ENCODE measurements at regions of chr1 and their contacts with region 1.

Region 1: GRCh38 chr1:204363335-204364124 is 3.8 kb upstream of the PLEKHA6 start:
- DNase-seq: peak; percentile 84
- H3K4me3 Mint-ChIP-seq: peak overlapping the region; percentile 38
- H3K27ac Mint-ChIP-seq: peak overlapping the region; percentile 52
- H3K4me1 Mint-ChIP-seq: peaks cover 19% of the 10 kb centered on the region
- H3K27me3 Mint-ChIP-seq: peaks cover 5% of the 10 kb centered on the region

Region 2: DNA sequence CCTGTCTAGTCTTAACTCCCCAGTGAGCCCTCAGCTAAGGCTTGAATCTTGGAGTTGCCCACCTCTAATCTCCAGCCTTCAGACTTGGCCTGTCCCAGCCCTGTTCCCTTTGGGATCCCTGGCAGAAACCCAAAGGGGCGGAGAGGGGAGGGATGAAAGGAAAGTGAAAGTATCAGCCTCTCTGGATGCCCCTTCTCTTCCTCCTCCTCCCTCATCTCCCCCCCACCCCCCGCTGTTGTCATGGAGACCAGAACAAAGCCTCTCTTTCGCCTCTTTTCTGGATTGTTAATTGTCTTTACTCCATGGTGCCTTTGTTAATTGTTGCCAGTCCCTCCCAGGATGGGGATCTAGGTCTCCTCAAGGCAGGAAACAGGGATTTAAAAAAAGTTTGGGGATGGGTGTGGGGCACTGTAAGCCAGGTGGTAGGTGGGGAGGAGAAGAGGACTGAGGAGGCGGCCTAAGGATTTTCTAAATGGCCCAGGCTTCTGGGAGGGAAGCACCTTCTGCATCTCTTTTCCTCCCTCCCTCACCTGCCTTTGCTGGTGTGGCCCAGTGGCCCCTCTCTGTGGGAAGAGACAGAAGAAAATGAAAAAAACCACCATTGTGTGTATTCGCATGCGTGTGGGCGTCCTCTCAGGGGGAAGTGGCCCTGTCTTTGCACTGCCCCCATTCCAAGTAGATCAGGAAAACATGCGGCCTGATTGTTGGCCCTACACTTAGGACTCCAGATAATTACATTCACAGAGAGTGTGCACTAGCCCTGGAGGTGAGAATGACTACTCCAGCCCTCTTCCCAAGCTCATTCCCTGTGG is 298.1 kb before region 1 on chr1:
- CTCF ChIA-PET with region 1: no interaction called
- intact Hi-C with region 1: no loop called
- DNase-seq: no peak
- H3K4me3 Mint-ChIP-seq: no peak overlapping the region
- H3K27ac Mint-ChIP-seq: no peak overlapping the region
- H3K4me1 Mint-ChIP-seq: peaks cover 5% of the 10 kb centered on the region
- H3K27me3 Mint-ChIP-seq: no peaks in the 10 kb centered on the region

Region 3: GRCh38 chr1:204162231-204163074 is 201.1 kb before region 1 on chr1:
- CTCF ChIA-PET with region 1: interaction called, 88 read pairs
- intact Hi-C with region 1: loop called (anchors 1 kb)
- DNase-seq: peak; percentile 87
- H3K4me3 Mint-ChIP-seq: no peak overlapping the region
- H3K27ac Mint-ChIP-seq: no peak overlapping the region
- H3K4me1 Mint-ChIP-seq: no peaks in the 10 kb centered on the region
- H3K27me3 Mint-ChIP-seq: peaks cover 1% of the 10 kb centered on the region

Region 4: GRCh38 chr1:204213668-204214662 is 149.6 kb before region 1 on chr1 and contains the start of gene GOLT1A:
- CTCF ChIA-PET with region 1: interaction called, 20 read pairs
- intact Hi-C with region 1: loop called (anchors 1 kb)
- DNase-seq: peak; percentile 74
- H3K4me3 Mint-ChIP-seq: peak within 1 kb of the TSS; percentile 20
- H3K27ac Mint-ChIP-seq: no peak within 1 kb of the TSS
- H3K4me1 Mint-ChIP-seq: peaks cover 5% of the 10 kb centered on the region
- H3K27me3 Mint-ChIP-seq: no peaks in the 10 kb centered on the region
- total RNA-seq, gene GOLT1A: not detected

Region 5: GRCh38 chr1:204286831-204287421 is 76.6 kb before region 1 on chr1:
- CTCF ChIA-PET with region 1: interaction called, 11 read pairs
- intact Hi-C with region 1: no loop called
- DNase-seq: peak; percentile 42
- H3K4me3 Mint-ChIP-seq: peak overlapping the region; percentile 65
- H3K27ac Mint-ChIP-seq: peak overlapping the region; percentile 68
- H3K4me1 Mint-ChIP-seq: peaks cover 20% of the 10 kb centered on the region
- H3K27me3 Mint-ChIP-seq: peaks cover 5% of the 10 kb centered on the region

Region 6: GRCh38 chr1:204341380-204341779 is 22.1 kb before region 1 on chr1:
- CTCF ChIA-PET with region 1: interaction called, 23 read pairs
- intact Hi-C with region 1: no loop called
- DNase-seq: no peak
- H3K4me3 Mint-ChIP-seq: no peak overlapping the region
- H3K27ac Mint-ChIP-seq: no peak overlapping the region
- H3K4me1 Mint-ChIP-seq: no peaks in the 10 kb centered on the region
- H3K27me3 Mint-ChIP-seq: no peaks in the 10 kb centered on the region

Region 7: DNA sequence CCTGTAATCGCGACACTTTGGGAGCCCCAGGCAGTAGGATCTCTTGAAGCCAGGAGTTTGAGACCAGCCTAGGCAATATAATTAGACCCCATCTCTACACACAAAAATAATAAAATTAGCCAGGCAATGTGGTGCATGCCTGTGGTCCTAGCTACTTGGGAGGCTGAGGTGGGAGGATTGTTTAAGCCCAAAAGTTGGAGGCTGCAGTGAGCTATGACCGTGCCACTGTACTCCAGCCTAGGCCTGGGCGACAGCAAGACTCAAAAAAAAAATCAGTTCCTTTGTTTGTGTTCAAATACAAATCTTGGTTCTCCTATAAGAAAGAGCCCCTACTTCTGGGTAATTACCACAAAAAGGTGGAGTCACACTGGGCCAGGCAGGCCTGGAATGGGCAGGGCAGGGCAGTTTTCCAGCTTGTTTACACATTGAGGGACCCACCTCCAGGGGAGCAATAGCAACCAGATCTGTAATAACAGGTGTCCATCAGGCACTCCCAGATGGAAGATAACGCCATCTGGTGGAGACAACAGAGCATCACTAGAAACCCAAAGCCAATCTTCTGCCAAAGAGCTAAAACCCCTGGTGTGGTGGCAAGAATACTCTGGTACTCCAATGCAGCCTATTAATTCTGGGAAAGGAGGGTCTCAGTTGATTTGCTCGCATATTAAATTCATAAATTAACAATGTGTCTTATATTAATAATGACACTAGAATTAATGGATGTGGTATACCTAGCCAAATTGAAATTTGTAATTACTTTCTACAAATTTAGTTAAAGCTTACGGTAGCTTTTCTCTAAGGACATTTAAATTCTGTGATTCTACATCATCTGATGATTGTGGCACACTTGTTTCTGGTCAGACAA is 34.9 kb after region 1 on chr1:
- CTCF ChIA-PET with region 1: interaction called, 26 read pairs
- intact Hi-C with region 1: no loop called
- DNase-seq: peak; percentile 73
- H3K4me3 Mint-ChIP-seq: no peak overlapping the region
- H3K27ac Mint-ChIP-seq: peak overlapping the region; percentile 87
- H3K4me1 Mint-ChIP-seq: peaks cover 10% of the 10 kb centered on the region
- H3K27me3 Mint-ChIP-seq: no peaks in the 10 kb centered on the region

Region 8: GRCh38 chr1:204461331-204462228 is 98.0 kb after region 1 on chr1:
- CTCF ChIA-PET with region 1: no interaction called
- intact Hi-C with region 1: no loop called
- DNase-seq: no peak
- H3K4me3 Mint-ChIP-seq: no peak overlapping the region
- H3K27ac Mint-ChIP-seq: peak overlapping the region; percentile 26
- H3K4me1 Mint-ChIP-seq: peaks cover 60% of the 10 kb centered on the region
- H3K27me3 Mint-ChIP-seq: no peaks in the 10 kb centered on the region

Measured in activated naive CD4-positive, alpha-beta T cell treated with anti-CD3 and anti-CD28 coated beads for 36 hours (primary cell).